Naive thymus-derived CD4-positive, alpha-beta T cell (primary cell): ENCODE measurements at regions of chr1 and their contacts with region 1.

Region 1: GRCh38 chr1:77313491-77313890 is 31.7 kb downstream of the AK5 start:
- DNase-seq: peak in 8 of 9 donors; percentile 7 to 29 (median 26)
- ATAC-seq: peak; percentile 82
- H3K4me3 ChIP-seq: no peak overlapping the region
- H3K4me3 Mint-ChIP-seq: peak overlapping the region in 4 of 10 donors; percentile 23 to 53 (median 38)
- H3K27ac ChIP-seq: no peak overlapping the region
- H3K27ac Mint-ChIP-seq: peak overlapping the region in 8 of 9 donors; percentile 13 to 84 (median 68)
- H3K4me1 ChIP-seq: peaks cover 2 to 19% of the 10 kb centered on the region in 2 donors
- H3K4me1 Mint-ChIP-seq: peaks cover 17 to 58% (median 49%) of the 10 kb centered on the region in 7 donors
- H3K27me3 ChIP-seq: no peaks in the 10 kb centered on the region
- H3K27me3 Mint-ChIP-seq: no peaks in the 10 kb centered on the region

Region 2: GRCh38 chr1:76961181-76961819 is 352.2 kb before region 1 on chr1:
- CTCF ChIA-PET with region 1: no interaction called
- POLR2A ChIA-PET with region 1: no interaction called
- intact Hi-C with region 1: no loop called
- DNase-seq: no peak
- ATAC-seq: no peak
- H3K4me3 ChIP-seq: no peak overlapping the region
- H3K4me3 Mint-ChIP-seq: no peak overlapping the region
- H3K27ac ChIP-seq: no peak overlapping the region
- H3K27ac Mint-ChIP-seq: no peak overlapping the region
- H3K4me1 ChIP-seq: no peaks in the 10 kb centered on the region
- H3K4me1 Mint-ChIP-seq: peaks cover 0 to 2% (median 0%) of the 10 kb centered on the region in 7 donors
- H3K27me3 ChIP-seq: no peaks in the 10 kb centered on the region
- H3K27me3 Mint-ChIP-seq: no peaks in the 10 kb centered on the region

Region 3: DNA sequence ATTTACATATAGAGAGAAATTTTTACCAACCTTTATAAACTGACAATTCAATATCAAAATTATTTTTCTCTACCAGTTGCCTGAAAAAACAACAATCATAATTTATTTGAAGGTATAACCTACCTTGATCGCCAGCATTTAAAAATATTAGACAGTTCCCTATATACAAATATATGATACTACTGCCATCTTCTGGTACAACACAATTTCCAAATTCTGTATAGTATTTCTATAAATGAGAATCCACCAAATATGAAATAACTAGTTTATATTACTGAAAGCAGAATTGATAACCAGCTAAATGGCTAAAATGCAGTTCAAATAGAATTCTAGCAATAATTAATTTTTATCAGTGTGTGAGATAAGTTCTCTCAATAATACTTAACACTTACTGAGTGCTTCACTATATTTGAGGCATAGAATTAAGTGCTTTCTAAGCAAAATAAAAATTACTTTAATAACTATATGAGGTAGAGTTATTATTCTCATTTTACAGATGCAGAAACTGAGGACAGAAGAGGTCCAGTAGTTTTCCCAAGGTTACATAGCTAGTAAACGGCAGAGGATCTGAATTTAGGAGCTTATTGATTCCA is 169.9 kb before region 1 on chr1:
- CTCF ChIA-PET with region 1: no interaction called
- POLR2A ChIA-PET with region 1: no interaction called
- intact Hi-C with region 1: loop called in 1 of 2 experiments (anchors 1 kb)
- DNase-seq: peak in 4 of 9 donors; percentile 9 to 31 (median 18)
- ATAC-seq: no peak
- H3K4me3 ChIP-seq: no peak overlapping the region
- H3K4me3 Mint-ChIP-seq: no peak overlapping the region
- H3K27ac ChIP-seq: no peak overlapping the region
- H3K27ac Mint-ChIP-seq: no peak overlapping the region
- H3K4me1 ChIP-seq: peaks cover 0 to 3% of the 10 kb centered on the region in 2 donors
- H3K4me1 Mint-ChIP-seq: peaks cover 0 to 8% (median 6%) of the 10 kb centered on the region in 7 donors
- H3K27me3 ChIP-seq: no peaks in the 10 kb centered on the region
- H3K27me3 Mint-ChIP-seq: no peaks in the 10 kb centered on the region

Region 4: DNA sequence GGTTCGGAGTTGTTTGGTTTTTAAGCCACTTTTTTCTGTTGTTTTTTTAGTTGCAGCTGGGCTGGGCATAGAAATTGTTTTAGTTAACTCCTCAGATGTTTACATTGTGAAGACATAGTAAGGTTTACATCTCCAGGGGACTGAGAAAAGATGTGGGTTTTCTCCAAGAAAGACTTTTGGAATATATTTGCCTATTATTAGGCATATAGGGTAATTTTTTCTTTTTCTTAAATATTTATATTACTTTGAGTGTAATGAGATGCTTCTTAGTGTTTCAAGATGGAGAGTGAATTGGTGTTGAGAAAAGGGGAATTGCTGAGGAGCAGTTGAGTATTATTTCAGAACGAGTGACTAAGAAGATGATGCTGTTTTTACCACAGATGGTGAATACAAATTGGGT is 67.7 kb before region 1 on chr1:
- CTCF ChIA-PET with region 1: no interaction called
- POLR2A ChIA-PET with region 1: no interaction called
- intact Hi-C with region 1: no loop called
- DNase-seq: no peak
- ATAC-seq: no peak
- H3K4me3 ChIP-seq: no peak overlapping the region
- H3K4me3 Mint-ChIP-seq: no peak overlapping the region
- H3K27ac ChIP-seq: no peak overlapping the region
- H3K27ac Mint-ChIP-seq: no peak overlapping the region
- H3K4me1 ChIP-seq: no peaks in the 10 kb centered on the region
- H3K4me1 Mint-ChIP-seq: peaks cover 0 to 14% (median 8%) of the 10 kb centered on the region in 7 donors
- H3K27me3 ChIP-seq: no peaks in the 10 kb centered on the region
- H3K27me3 Mint-ChIP-seq: no peaks in the 10 kb centered on the region

Region 5: GRCh38 chr1:77281491-77282186 is 31.9 kb before region 1 on chr1 and contains the start of gene AK5:
- CTCF ChIA-PET with region 1: interaction called, 3 read pairs
- POLR2A ChIA-PET with region 1: interaction called, 44 read pairs
- intact Hi-C with region 1: loop called in 1 of 2 experiments (anchors 1 kb)
- DNase-seq: peak; percentile 32 to 60 (median 53)
- ATAC-seq: peak; percentile 76
- H3K4me3 ChIP-seq: peak within 1 kb of the TSS; percentile 74
- H3K4me3 Mint-ChIP-seq: peak within 1 kb of the TSS; percentile 75 to 95 (median 92)
- H3K27ac ChIP-seq: peak within 1 kb of the TSS; percentile 67
- H3K27ac Mint-ChIP-seq: peak within 1 kb of the TSS in 8 of 9 donors; percentile 76 to 95 (median 84)
- H3K4me1 ChIP-seq: peaks cover 0 to 31% of the 10 kb centered on the region in 2 donors
- H3K4me1 Mint-ChIP-seq: peaks cover 29 to 72% (median 59%) of the 10 kb centered on the region in 7 donors
- H3K27me3 ChIP-seq: no peaks in the 10 kb centered on the region
- H3K27me3 Mint-ChIP-seq: peaks cover 0 to 46% (median 0%) of the 10 kb centered on the region in 5 donors
- total RNA-seq, gene AK5: 1.7 to 59.4 (median 41.0) TPM

Region 6: GRCh38 chr1:77333501-77333900 is 20.0 kb after region 1 on chr1:
- CTCF ChIA-PET with region 1: no interaction called
- POLR2A ChIA-PET with region 1: interaction called, 3 read pairs
- intact Hi-C with region 1: loop called in 1 of 2 experiments (anchors 2 kb)
- DNase-seq: no peak
- ATAC-seq: no peak
- H3K4me3 ChIP-seq: no peak overlapping the region
- H3K4me3 Mint-ChIP-seq: no peak overlapping the region
- H3K27ac ChIP-seq: no peak overlapping the region
- H3K27ac Mint-ChIP-seq: peak overlapping the region in 1 of 9 donors; percentile 70
- H3K4me1 ChIP-seq: peaks cover 0 to 13% of the 10 kb centered on the region in 2 donors
- H3K4me1 Mint-ChIP-seq: peaks cover 2 to 53% (median 33%) of the 10 kb centered on the region in 7 donors
- H3K27me3 ChIP-seq: no peaks in the 10 kb centered on the region
- H3K27me3 Mint-ChIP-seq: no peaks in the 10 kb centered on the region

Region 7: DNA sequence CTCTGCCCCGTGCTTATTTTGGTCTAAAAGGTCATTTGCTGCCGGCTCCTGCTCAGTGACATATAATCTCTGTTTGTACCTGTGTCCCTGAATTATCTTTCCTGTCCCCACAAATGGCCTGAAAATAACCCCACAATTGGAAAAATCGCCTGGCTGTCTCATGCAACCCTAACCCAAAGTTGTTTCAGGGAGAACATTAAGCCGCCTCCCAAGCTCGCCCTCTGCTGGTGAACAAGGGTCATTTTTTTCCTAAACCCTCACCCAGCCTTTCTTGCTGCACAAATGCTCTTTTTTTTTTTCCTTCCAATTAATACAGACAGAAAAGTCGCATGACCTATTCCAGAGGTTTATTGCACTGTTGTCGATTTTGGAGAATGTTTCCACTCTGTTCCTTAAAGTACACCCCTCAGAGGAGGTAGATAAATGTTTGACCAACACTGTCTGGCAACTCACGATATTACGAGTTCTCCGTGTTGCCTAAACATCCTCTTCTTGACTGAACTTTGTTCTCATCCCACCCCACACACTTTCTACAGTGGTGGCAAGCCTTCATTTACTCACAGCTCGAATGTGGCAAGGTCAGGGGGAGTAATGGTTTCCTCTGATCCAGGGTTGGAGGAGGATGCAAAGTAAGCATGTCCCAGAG is 220.3 kb after region 1 on chr1:
- CTCF ChIA-PET with region 1: interaction called, 4 read pairs
- POLR2A ChIA-PET with region 1: interaction called, 4 read pairs
- intact Hi-C with region 1: loop called in 1 of 2 experiments (anchors 2 kb)
- DNase-seq: peak; percentile 34 to 75 (median 60)
- ATAC-seq: peak; percentile 71
- H3K4me3 ChIP-seq: no peak overlapping the region
- H3K4me3 Mint-ChIP-seq: peak overlapping the region in 6 of 10 donors; percentile 22 to 69 (median 50)
- H3K27ac ChIP-seq: no peak overlapping the region
- H3K27ac Mint-ChIP-seq: peak overlapping the region in 8 of 9 donors; percentile 16 to 94 (median 38)
- H3K4me1 ChIP-seq: peaks cover 0 to 4% of the 10 kb centered on the region in 2 donors
- H3K4me1 Mint-ChIP-seq: peaks cover 2 to 16% (median 10%) of the 10 kb centered on the region in 7 donors
- H3K27me3 ChIP-seq: no peaks in the 10 kb centered on the region
- H3K27me3 Mint-ChIP-seq: no peaks in the 10 kb centered on the region